ENCODE measurements at regions of chr12 and their contacts with region 1.

Region 1: DNA sequence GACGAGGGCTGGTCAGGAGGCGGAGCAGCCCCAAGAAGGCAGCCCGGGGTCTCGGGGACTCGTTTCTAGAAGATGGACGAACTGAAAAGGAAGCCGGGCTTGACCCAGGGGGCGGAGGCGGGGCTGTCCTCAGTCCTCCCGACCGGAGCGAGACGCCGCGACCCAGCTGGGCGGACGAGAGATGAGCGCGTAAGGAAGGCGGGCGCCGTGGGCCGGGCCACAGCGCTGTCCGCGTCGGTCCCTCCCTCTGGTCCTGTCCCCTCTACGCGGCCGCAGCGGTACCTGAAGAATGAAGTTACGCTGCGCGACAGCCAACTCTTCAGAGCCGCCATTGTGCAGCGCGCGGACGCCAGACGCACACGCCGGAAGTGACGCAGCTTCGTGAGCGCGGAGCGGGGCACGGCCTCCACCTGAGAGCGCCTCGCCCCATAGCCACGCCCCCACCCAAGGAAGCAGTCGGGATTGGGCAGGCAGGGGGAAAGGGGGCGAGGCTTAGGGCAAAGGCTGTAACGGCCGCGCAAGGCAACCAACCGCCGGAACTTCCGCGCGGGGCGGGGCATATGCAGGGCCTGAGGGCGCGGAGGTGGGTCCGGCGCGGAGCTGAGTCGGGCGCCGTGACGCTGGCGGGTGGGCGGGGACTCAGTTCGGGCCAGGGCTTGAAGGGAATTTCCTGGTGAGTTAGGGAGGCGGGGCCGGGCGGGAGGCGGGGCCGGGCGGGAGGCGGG is at the start of gene DIABLO:
- DNase-seq: peak; percentile 100
- H3K4me3 Mint-ChIP-seq: peak within 1 kb of the TSS; percentile 84
- H3K27ac Mint-ChIP-seq: peak within 1 kb of the TSS; percentile 79
- H3K4me1 Mint-ChIP-seq: peaks cover 39% of the 10 kb centered on the region
- H3K27me3 Mint-ChIP-seq: no peaks in the 10 kb centered on the region
- total RNA-seq, gene DIABLO: 46.1 to 48.1 TPM

Region 2: DNA sequence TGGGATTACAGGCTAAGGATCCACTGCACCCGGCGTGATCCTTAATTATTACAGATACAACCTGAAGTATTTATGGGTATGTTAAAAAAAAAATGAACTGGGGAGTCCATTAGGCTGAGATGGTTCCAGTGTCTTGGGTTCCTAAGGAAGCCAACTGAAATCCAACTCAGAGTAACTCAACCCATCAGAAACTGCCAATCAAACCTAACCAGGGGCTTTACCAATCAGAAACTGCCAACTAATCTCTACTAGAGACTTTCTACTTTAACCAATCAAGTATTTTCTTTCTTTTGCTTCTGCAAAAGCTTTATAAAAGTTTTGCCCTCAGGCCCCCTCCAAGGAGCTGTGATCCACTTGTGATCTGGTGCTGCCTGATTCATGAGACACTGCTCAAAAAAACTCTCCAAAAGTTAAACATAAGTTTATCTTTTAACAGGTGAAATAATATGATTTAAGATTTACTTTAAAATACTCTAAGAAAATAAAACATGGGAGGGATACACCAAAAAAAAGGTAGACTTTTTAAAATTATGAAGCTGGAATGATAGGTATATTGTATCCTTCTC is 1412.2 kb before region 1 on chr12:
- CTCF ChIA-PET with region 1: no interaction called
- intact Hi-C with region 1: no loop called
- DNase-seq: no peak
- H3K4me3 Mint-ChIP-seq: no peak overlapping the region
- H3K27ac Mint-ChIP-seq: no peak overlapping the region
- H3K4me1 Mint-ChIP-seq: peaks cover 24% of the 10 kb centered on the region
- H3K27me3 Mint-ChIP-seq: no peaks in the 10 kb centered on the region

Region 3: GRCh38 chr12:121802846-121803630 is 422.8 kb before region 1 on chr12:
- CTCF ChIA-PET with region 1: no interaction called
- intact Hi-C with region 1: loop called (anchors 1 kb)
- DNase-seq: peak; percentile 95
- H3K4me3 Mint-ChIP-seq: peak overlapping the region; percentile 97
- H3K27ac Mint-ChIP-seq: peak overlapping the region; percentile 100
- H3K4me1 Mint-ChIP-seq: peaks cover 33% of the 10 kb centered on the region
- H3K27me3 Mint-ChIP-seq: no peaks in the 10 kb centered on the region

Region 4: GRCh38 chr12:121992059-121992879 is 233.6 kb before region 1 on chr12:
- CTCF ChIA-PET with region 1: no interaction called
- intact Hi-C with region 1: loop called (anchors 1 kb)
- DNase-seq: peak; percentile 89
- H3K4me3 Mint-ChIP-seq: peak overlapping the region; percentile 43
- H3K27ac Mint-ChIP-seq: peak overlapping the region; percentile 87
- H3K4me1 Mint-ChIP-seq: peaks cover 20% of the 10 kb centered on the region
- H3K27me3 Mint-ChIP-seq: no peaks in the 10 kb centered on the region

Region 5: DNA sequence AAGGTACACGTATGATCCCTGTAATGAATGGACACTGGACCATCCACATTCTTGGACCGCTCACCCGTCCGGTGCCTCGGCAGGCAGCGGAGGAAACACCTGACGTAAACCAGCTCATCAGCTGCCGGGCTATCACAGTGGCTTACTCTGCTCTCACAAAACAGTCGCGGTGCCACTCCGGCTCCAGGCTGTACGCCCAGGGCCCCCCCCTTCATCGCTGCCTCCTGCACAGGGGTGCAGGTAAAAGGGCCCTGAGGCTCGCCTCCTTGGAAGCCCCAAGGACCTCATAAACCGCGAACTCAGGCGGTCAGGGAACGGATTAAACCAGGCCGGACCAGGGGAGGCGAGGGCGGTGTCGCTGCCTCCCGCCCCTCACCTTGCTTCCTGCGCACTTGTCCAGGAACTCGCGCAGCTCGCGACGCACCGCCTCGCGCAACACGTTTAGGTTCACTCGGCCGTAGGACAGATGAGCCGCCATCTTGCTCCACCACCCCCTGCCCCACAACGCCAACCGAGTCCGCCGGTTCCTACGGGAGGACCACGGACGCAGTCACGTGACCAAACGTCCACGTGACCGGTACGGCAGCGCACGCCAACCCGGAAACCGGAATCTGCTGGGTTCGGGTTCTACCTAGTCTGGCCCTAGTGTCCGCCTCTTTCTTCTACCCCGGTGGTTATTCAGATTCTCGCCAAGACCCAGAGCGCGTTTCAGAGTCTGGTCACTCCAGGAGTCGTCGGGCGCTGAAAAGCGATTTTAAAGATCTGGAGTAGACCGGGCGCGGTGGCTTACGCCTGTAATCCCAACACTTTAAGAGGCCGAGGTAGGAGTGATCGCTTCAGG is 40.3 kb after region 1 on chr12 and contains the start of gene VPS33A:
- CTCF ChIA-PET with region 1: interaction called, 6 read pairs
- intact Hi-C with region 1: loop called (anchors 1 kb)
- DNase-seq: peak; percentile 95
- H3K4me3 Mint-ChIP-seq: peak within 1 kb of the TSS; percentile 94
- H3K27ac Mint-ChIP-seq: peak within 1 kb of the TSS; percentile 96
- H3K4me1 Mint-ChIP-seq: peaks cover 23% of the 10 kb centered on the region
- H3K27me3 Mint-ChIP-seq: peaks cover 3% of the 10 kb centered on the region
- total RNA-seq, gene VPS33A: 15.9 to 17.2 TPM

Region 6: GRCh38 chr12:122500685-122501488 is 275.0 kb after region 1 on chr12 and contains the start of gene ZCCHC8:
- CTCF ChIA-PET with region 1: no interaction called
- intact Hi-C with region 1: loop called (anchors 1 kb)
- DNase-seq: peak; percentile 98
- H3K4me3 Mint-ChIP-seq: peak within 1 kb of the TSS; percentile 93
- H3K27ac Mint-ChIP-seq: peak within 1 kb of the TSS; percentile 97
- H3K4me1 Mint-ChIP-seq: peaks cover 39% of the 10 kb centered on the region
- H3K27me3 Mint-ChIP-seq: no peaks in the 10 kb centered on the region
- total RNA-seq, gene ZCCHC8: 25.9 to 26.0 TPM

Region 7: GRCh38 chr12:122793685-122794106 is 567.9 kb after region 1 on chr12:
- CTCF ChIA-PET with region 1: no interaction called
- intact Hi-C with region 1: loop called (anchors 1 kb)
- DNase-seq: peak; percentile 11
- H3K4me3 Mint-ChIP-seq: no peak overlapping the region
- H3K27ac Mint-ChIP-seq: no peak overlapping the region
- H3K4me1 Mint-ChIP-seq: no peaks in the 10 kb centered on the region
- H3K27me3 Mint-ChIP-seq: no peaks in the 10 kb centered on the region